Posterior cingulate gyrus (tissue), 11 donors: ENCODE measurements at regions of chr9 and their contacts with region 1.

Region 1: DNA sequence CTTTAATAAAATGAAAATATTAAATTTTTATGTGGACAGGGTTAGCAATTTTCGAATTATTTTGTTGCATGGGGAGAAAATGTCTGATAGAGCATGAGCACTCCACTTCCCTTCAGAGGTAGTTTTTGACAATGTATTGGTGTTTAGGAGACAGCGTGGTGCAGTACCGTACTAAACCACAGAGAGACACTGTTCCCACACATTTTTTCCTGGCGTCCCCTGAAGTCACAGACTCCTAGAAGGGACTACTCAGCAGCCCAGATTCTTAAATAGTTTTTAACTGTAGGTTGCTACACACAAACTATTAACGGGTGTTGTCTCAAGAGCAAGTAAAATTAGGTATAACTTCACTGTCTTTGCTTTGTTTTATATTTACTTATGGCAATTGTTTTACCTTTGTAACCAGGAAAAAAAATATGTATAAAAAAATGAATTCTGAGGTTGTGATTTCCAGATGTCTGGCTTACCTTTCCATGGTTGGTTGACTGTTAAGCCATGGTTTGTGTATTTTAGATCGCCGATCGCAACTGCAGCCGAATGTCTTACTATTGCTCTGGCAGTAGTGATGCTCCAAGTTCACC is 171.2 kb downstream of the DOCK8 start:
- DNase-seq: peak in 5 of 10 donors; percentile 44 to 84 (median 52)

Region 2: DNA sequence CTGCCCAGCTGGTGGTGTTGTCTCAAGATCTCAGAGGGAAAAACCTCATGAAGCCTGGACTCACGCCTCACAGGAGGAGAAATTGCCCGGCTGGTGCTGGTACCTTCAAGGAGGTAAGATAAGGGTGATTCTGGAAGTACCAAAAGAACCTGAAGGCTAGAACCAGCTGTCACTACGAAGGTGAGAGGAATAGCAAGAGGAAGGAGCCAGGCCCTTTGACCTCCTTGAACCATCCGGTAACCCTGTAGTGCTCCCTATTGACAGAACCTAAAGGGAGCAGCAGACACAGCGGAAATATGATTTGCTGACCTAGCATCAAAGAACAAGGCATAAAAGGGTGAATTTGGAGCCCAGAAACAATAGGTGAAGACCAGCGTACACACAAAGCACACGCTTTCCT is 79.0 kb before region 1 on chr9:
- intact Hi-C with region 1: no loop called
- DNase-seq: no peak

Region 3: DNA sequence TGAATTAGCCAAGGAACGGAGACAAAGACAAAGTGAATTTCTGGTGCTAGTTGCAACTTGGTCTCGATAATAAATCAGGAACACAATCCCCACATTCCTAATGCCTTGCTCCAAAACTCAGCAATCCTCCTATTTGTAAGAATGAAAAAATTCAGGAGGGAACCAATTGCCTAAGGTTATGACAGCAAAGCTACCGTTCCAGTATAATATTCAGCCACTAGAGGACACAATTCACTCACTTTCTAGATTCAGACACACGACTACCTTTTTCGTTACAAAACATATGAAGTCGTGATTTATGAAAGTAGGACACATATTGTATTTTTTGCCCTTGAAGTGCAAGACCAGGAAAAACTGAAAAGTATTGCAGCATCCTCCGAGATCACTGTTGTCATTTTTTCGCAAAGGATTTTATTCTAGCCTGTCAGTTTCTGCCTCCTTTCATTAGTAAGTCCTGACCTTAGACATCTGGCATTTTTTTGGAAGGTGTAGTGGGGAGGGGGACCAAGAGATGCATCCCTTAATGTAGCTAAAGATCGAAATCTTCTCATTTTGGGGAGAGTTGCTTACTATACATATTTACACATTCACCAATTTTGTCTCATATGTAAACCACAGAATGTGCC is 38.1 kb before region 1 on chr9:
- intact Hi-C with region 1: no loop called
- DNase-seq: no peak

Region 4: GRCh38 chr9:419571-420402 is 33.9 kb after region 1 on chr9:
- intact Hi-C with region 1: no loop called
- DNase-seq: no peak

Region 5: DNA sequence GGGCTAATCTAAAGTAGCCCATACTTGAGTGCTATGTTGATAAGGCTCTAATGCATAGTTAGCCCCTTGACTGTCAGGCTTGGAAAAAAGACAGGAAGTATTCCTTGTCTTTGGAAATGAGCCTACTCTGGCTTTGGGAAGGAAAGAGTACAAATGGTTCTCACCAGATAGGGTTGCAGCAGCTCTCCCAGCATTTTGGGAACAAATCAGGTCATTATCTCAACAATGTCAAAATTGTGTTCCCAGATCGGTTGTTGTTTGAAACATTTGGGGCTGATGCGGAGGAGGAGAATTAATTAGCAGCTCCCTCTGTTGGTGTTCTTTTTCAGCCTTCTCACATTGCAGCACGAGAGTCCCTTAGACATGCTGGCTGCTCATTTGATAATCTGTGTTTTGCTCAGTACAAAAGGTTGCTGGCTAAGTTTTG is 160.9 kb after region 1 on chr9:
- intact Hi-C with region 1: loop called (anchors 10 kb)
- DNase-seq: peak in 2 of 10 donors; percentile 9 to 41

Region 6: DNA sequence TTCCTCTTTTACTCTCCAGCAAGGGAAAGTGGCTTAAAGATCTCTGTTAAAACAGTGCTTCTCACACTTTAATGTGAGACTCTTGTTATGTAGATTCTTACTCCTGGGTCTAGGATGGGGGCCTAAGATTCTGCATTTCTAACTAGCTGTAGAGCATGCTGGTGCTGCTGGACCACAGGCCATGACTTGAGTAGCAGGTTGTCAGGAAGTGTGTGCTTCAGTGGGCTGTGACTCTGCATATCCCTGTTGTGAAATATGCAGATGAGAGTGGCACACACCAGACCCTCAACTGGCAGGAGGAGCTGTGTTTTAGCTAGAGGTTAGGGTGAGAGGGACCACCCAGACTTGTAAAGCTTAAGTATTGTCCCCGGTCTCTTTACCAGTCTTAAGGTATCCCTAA is 264.5 kb after region 1 on chr9:
- intact Hi-C with region 1: no loop called
- DNase-seq: no peak

Region 7: DNA sequence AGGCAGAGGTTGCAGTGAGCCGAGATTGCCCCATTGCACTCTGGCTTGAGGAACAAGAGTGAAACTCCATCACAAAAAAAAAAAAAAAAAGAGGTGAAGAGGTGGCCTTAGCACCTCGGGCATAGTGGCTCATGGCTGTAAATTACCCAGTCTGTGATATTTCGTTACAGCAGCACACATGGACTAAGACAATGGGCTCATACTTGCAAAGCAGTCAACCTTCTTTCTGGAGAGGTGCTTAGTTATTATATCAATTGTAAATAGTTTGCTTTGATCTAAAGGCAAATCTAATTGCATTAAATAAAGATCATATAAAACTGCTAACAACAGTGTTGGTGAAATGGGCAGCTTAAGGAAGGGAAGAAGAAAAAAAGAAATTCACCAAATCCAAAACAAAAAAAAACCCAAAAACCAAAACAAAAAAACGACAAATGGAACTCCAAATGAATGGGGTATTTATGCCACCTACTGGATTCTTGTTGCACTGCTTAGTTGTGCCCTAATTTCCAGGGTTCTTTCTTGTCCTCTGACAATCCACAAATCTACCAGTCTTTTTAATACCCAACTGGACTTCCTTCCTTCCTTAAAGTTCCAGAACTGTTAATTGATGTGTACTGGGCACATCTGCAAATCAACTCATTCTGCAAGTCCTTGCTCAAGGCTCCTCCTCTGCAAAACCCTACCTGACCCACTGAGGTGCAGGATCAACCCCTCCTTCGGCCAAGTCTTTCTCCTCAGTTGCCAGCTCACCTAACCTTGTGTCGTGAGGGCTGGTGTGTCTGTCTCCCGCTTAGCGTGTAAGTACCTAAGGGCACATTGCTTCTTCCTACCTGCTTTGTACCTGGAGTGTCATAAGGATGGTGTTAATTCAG is 420.6 kb after region 1 on chr9:
- intact Hi-C with region 1: loop called (anchors 5 kb)
- DNase-seq: no peak